ENCODE measurements at regions of chr22 and their contacts with region 1.

Region 1: DNA sequence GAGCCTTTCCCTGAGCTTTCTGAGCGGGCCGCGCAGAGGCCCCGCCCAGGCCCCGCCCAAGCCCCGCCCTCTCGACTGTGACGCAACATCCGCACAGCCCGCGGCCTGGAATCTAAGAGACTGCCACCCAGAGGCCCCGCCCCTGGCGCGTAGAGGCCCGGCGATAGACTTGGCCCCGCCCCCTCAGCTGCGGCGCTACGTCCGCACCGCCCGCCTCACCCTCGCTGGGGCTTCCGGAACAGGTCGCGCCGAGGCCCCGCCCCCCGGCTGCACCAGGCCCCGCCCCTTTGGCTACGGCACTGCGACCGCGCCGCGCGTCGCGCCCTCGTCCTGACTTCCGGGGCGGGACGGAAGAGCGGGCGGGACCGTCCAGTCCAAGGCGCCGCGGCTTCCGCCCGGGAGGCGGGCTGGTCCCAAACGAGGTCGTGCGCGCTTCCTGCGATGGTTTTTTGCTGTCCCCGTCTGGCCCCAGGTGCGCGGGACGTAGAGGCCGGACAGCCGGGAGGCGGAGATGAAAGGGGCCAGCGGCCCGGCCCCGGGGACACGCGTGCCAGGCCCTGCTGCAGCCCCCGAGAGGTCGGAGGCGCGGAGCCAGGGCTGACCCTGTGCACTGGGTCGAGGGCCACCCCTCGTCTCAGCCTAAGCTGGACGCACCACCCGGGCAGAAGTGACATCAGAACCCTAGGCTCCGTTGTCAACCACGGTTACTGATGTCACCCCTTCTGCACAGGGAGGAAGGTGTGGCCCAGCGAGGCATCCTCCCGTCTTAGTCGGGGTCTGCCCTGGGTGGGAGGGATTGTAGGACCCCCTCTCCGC is 59.0 kb upstream of the WNT7B start:
- DNase-seq: peak; percentile 99
- ATAC-seq: peak; percentile 95
- H3K4me3 Mint-ChIP-seq: peak overlapping the region; percentile 80
- H3K27ac Mint-ChIP-seq: peak overlapping the region; percentile 91
- H3K4me1 Mint-ChIP-seq: peaks cover 15% of the 10 kb centered on the region
- H3K27me3 Mint-ChIP-seq: no peaks in the 10 kb centered on the region

Region 2: GRCh38 chr22:45612451-45612901 is 423.5 kb before region 1 on chr22:
- CTCF ChIA-PET with region 1: no interaction called
- POLR2A ChIA-PET with region 1: no interaction called
- intact Hi-C with region 1: no loop called
- DNase-seq: peak; percentile 60
- ATAC-seq: peak; percentile 68
- H3K4me3 Mint-ChIP-seq: no peak overlapping the region
- H3K27ac Mint-ChIP-seq: no peak overlapping the region
- H3K4me1 Mint-ChIP-seq: peaks cover 9% of the 10 kb centered on the region
- H3K27me3 Mint-ChIP-seq: peaks cover 6% of the 10 kb centered on the region

Region 3: DNA sequence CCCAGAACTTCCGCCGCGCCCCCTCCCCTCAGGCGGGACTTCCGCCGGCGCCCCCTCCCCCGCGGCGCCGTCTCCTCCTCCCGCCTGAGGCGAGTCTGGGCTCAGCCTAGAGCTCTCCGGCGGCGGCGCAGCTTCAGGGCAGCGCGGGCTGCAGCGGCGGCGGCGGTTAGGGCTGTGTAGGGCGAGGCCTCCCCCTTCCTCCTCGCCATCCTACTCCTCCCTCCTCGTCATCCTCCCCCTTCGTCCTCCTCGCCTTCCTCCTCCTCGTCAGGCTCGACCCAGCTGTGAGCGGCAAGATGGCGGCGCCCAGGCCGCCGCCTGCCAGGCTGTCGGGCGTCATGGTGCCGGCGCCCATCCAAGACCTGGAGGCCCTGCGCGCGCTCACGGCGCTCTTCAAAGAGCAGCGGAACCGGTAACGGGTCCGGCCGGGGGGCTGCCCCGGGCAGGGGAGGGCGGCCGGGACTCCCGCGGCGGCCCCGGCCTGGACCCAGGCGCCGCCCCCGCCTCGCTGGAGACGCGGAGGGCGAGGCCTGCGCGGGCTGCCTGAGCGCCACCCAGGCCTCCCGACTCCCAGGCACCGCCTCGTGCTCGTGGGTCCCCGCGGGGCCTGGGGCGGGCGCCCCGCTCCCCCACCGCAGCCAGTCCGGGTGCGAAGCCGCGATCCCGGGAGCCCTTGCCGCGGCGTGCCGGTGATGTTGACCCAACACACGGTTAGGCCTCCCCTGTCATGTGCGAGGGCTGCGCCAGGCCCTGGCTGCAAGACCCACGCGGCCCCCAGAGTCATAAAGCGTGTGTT is 364.0 kb before region 1 on chr22 and contains the start of gene ATXN10:
- CTCF ChIA-PET with region 1: no interaction called
- POLR2A ChIA-PET with region 1: no interaction called
- intact Hi-C with region 1: loop called in 1 of 2 experiments (anchors 1 kb)
- DNase-seq: peak; percentile 83
- ATAC-seq: peak; percentile 78
- H3K4me3 Mint-ChIP-seq: peak within 1 kb of the TSS; percentile 89
- H3K27ac Mint-ChIP-seq: peak within 1 kb of the TSS; percentile 87
- H3K4me1 Mint-ChIP-seq: peaks cover 33% of the 10 kb centered on the region
- H3K27me3 Mint-ChIP-seq: peaks cover 3% of the 10 kb centered on the region
- total RNA-seq, gene ATXN10: 87.1 to 101 TPM

Region 4: DNA sequence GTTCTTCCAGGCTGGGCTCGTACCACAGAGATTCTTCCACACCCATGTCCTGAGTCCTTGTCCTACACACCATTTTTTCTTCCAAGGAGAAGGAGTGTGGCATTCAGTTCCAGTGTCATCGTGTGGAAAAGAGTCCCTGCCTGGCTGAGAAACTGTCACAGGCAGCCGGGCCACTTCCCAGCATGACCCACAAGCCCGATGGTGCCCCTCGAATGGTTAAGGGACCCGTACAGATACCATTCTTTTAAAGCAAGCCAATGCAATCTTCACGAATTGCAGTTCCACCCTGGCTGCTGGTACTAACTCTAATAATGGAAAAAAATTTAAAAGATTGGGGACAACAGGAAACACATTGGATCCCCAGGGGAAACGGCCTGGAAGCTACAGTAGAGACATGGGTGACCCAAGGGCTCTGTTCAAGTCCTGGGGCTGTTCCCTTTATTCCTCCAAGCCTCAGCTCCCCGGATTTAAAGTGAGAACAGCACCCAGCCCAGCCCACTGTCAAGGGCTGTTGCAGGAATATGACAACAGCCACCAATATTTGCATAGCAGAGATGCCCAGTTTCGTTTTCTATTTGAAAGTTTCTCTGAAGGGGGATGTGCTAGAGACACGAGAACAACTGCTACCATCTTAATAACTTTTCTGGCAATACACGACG is 21.9 kb after region 1 on chr22:
- CTCF ChIA-PET with region 1: interaction called, 9 read pairs
- POLR2A ChIA-PET with region 1: interaction called, 3 read pairs
- intact Hi-C with region 1: loop called (anchors 1 kb)
- DNase-seq: peak; percentile 66
- ATAC-seq: peak; percentile 82
- H3K4me3 Mint-ChIP-seq: peak overlapping the region; percentile 28
- H3K27ac Mint-ChIP-seq: peak overlapping the region; percentile 79
- H3K4me1 Mint-ChIP-seq: peaks cover 48% of the 10 kb centered on the region
- H3K27me3 Mint-ChIP-seq: no peaks in the 10 kb centered on the region

Region 5: GRCh38 chr22:46150034-46150654 is 114.2 kb after region 1 on chr22 and contains the start of gene PPARA:
- CTCF ChIA-PET with region 1: no interaction called
- POLR2A ChIA-PET with region 1: no interaction called
- intact Hi-C with region 1: loop called in 1 of 2 experiments (anchors 1 kb)
- DNase-seq: peak; percentile 90
- ATAC-seq: peak; percentile 87
- H3K4me3 Mint-ChIP-seq: peak within 1 kb of the TSS; percentile 74
- H3K27ac Mint-ChIP-seq: no peak within 1 kb of the TSS
- H3K4me1 Mint-ChIP-seq: peaks cover 13% of the 10 kb centered on the region
- H3K27me3 Mint-ChIP-seq: peaks cover 7% of the 10 kb centered on the region
- total RNA-seq, gene PPARA: 6.2 to 8.9 TPM

Region 6: GRCh38 chr22:46335201-46336118 is 299.5 kb after region 1 on chr22 and contains the start of gene TRMU:
- CTCF ChIA-PET with region 1: no interaction called
- POLR2A ChIA-PET with region 1: no interaction called
- intact Hi-C with region 1: loop called in 1 of 2 experiments (anchors 1 kb)
- DNase-seq: peak; percentile 86
- ATAC-seq: peak; percentile 89
- H3K4me3 Mint-ChIP-seq: peak within 1 kb of the TSS; percentile 99
- H3K27ac Mint-ChIP-seq: peak within 1 kb of the TSS; percentile 94
- H3K4me1 Mint-ChIP-seq: peaks cover 35% of the 10 kb centered on the region
- H3K27me3 Mint-ChIP-seq: no peaks in the 10 kb centered on the region
- total RNA-seq, gene TRMU: 61.4 to 75.3 TPM

Region 7: DNA sequence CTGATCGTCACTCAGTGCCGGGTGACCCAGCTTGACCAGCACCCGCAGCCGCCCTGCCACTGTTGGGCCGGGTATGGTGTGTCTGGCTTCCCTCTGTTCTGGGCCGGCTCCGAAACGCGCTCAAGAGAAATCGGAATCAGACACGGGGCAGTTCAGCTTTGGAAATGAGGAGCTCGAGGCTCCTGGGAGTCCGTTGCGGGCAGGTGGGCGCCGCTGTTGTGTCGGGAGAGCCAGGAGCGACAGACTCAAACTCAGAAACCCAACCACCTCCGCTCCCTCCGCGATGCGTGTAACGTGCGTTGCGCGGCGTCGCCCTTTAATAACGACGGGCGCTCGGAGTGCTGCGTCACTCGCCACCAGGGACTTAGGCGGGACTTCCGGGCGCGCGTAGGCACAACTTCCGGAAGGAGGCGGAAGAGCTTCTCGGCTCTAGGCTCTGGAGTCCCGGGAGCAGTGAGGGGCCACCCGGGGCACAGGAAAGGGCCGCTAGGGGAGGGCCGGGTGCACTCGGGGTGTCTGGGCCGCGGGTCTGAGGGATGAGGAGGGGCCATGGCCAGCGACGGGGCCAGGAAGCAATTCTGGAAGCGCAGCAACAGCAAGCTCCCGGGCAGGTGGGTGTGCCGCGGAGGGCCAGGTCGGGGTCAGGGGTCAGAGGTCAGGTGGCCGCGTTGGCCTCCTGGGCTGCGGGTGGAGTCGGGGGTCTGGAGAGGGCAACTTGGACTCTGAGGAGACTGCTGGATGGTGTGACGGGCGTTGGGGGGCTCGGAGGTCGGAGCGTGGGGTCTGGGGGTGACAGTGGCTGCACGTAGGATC is 726.5 kb after region 1 on chr22 and contains the start of gene TBC1D22A:
- CTCF ChIA-PET with region 1: no interaction called
- POLR2A ChIA-PET with region 1: interaction called, 3 read pairs
- intact Hi-C with region 1: loop called in 1 of 2 experiments (anchors 1 kb)
- DNase-seq: peak; percentile 97
- ATAC-seq: peak; percentile 90
- H3K4me3 Mint-ChIP-seq: peak within 1 kb of the TSS; percentile 94
- H3K27ac Mint-ChIP-seq: peak within 1 kb of the TSS; percentile 99
- H3K4me1 Mint-ChIP-seq: peaks cover 58% of the 10 kb centered on the region
- H3K27me3 Mint-ChIP-seq: no peaks in the 10 kb centered on the region
- total RNA-seq, gene TBC1D22A: 36.0 to 38.0 TPM